Body of pancreas (tissue), 4 donors: ENCODE measurements at regions of chr10 and their contacts with region 1.

Region 1: GRCh38 chr10:32055813-32056600 is at the start of gene KIF5B:
- DNase-seq: peak; percentile 87 to 91 (median 88)
- ATAC-seq: peak; percentile 93
- H3K4me3 ChIP-seq: peak within 1 kb of the TSS; percentile 70 to 79
- H3K27ac ChIP-seq: peak within 1 kb of the TSS; percentile 91 to 99 (median 94)
- H3K4me1 ChIP-seq: peaks cover 36% of the 10 kb centered on the region
- H3K27me3 ChIP-seq: no peaks in the 10 kb centered on the region
- CTCF ChIP-seq: no peak
- POLR2A ChIP-seq: peak; percentile 99
- total RNA-seq, gene KIF5B: 53.7 to 59.9 TPM

Region 2: DNA sequence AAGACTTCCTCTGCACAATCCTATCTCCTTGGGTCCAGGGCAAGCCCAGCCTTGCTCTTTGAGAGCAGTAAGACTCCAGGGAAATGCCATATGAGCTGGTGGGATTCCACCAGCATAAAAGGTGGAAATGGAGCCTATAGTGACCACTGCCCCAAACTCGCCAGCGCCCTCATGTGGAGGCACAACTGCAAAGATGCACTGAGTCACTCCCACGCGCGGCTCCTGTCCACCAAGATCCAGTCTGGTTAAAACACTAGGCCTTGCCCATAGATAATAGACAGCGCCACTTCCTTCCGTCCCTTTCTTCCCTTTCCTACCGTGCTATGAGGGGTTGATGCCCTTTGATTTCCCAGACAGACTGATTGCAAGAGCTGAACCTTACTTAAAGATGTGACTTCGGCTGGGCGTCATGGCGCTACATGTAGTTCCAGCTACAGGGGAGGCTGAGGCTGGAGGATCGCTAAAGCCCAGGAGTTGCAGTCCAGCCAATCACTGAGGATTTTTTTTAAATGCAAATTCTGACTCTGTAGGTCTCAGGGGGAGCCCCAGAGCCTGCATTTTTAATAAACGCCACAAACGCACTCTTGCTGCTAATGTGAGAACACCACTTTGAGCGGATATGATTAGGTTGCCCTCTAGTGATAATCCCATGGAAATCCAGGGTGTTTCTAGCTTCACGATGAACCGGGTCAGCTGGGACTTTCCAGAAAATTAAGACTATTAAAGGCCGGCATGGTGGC is 154.5 kb after region 1 on chr10:
- intact Hi-C with region 1: loop called (anchors 10 kb)
- DNase-seq: peak; percentile 17 to 32 (median 23)
- ATAC-seq: peak; percentile 78
- H3K4me3 ChIP-seq: no peak overlapping the region
- H3K27ac ChIP-seq: no peak overlapping the region
- H3K4me1 ChIP-seq: no peaks in the 10 kb centered on the region
- H3K27me3 ChIP-seq: no peaks in the 10 kb centered on the region
- CTCF ChIP-seq: peak; percentile 36 to 64 (median 55)
- POLR2A ChIP-seq: no peak